ENCODE measurements at regions of chr5 and their contacts with region 1.

Region 1: GRCh38 chr5:25990771-25991170 is 1047.6 kb downstream of the CDH9 start:
- DNase-seq: no peak
- H3K4me3 ChIP-seq: no peak overlapping the region
- H3K4me3 Mint-ChIP-seq: no peak overlapping the region
- H3K27ac ChIP-seq: no peak overlapping the region
- H3K27ac Mint-ChIP-seq: no peak overlapping the region
- H3K4me1 ChIP-seq: no peaks in the 10 kb centered on the region
- H3K4me1 Mint-ChIP-seq: no peaks in the 10 kb centered on the region
- H3K27me3 ChIP-seq: no peaks in the 10 kb centered on the region
- H3K27me3 Mint-ChIP-seq: no peaks in the 10 kb centered on the region

Region 2: DNA sequence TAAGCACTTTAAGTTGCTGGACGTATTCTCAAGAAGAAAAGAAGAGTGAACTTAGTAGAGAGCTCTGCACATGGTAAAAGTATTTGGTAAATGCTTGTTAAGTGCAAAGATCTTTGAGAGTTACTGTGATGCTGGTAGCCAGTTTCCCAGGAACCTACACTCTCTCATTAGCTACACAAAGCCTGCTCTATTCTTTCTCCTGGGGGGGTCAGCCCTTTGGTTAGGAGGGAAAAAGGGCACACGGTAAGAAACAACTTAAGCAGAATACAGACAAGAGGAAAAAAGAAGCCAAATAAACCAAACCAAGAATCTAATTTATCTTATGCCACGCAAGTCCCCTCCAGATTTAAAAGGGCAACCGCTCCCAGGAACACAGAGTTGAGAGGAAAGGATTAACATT is 245.9 kb before region 1 on chr5:
- CTCF ChIA-PET with region 1: no interaction called
- POLR2A ChIA-PET with region 1: no interaction called
- intact Hi-C with region 1: no loop called
- DNase-seq: no peak
- H3K4me3 ChIP-seq: no peak overlapping the region
- H3K4me3 Mint-ChIP-seq: no peak overlapping the region
- H3K27ac ChIP-seq: no peak overlapping the region
- H3K27ac Mint-ChIP-seq: no peak overlapping the region
- H3K4me1 ChIP-seq: no peaks in the 10 kb centered on the region
- H3K4me1 Mint-ChIP-seq: no peaks in the 10 kb centered on the region
- H3K27me3 ChIP-seq: no peaks in the 10 kb centered on the region
- H3K27me3 Mint-ChIP-seq: no peaks in the 10 kb centered on the region

Region 3: GRCh38 chr5:26003966-26004365 is 13.2 kb after region 1 on chr5:
- CTCF ChIA-PET with region 1: no interaction called
- POLR2A ChIA-PET with region 1: no interaction called
- intact Hi-C with region 1: no loop called
- DNase-seq: no peak
- H3K4me3 ChIP-seq: no peak overlapping the region
- H3K4me3 Mint-ChIP-seq: no peak overlapping the region
- H3K27ac ChIP-seq: no peak overlapping the region
- H3K27ac Mint-ChIP-seq: no peak overlapping the region
- H3K4me1 ChIP-seq: no peaks in the 10 kb centered on the region
- H3K4me1 Mint-ChIP-seq: no peaks in the 10 kb centered on the region
- H3K27me3 ChIP-seq: no peaks in the 10 kb centered on the region
- H3K27me3 Mint-ChIP-seq: no peaks in the 10 kb centered on the region

Region 4: GRCh38 chr5:26060212-26060611 is 69.4 kb after region 1 on chr5:
- CTCF ChIA-PET with region 1: no interaction called
- POLR2A ChIA-PET with region 1: no interaction called
- intact Hi-C with region 1: loop called (anchors 1 kb)
- DNase-seq: no peak
- H3K4me3 ChIP-seq: no peak overlapping the region
- H3K4me3 Mint-ChIP-seq: no peak overlapping the region
- H3K27ac ChIP-seq: no peak overlapping the region
- H3K27ac Mint-ChIP-seq: no peak overlapping the region
- H3K4me1 ChIP-seq: no peaks in the 10 kb centered on the region
- H3K4me1 Mint-ChIP-seq: no peaks in the 10 kb centered on the region
- H3K27me3 ChIP-seq: no peaks in the 10 kb centered on the region
- H3K27me3 Mint-ChIP-seq: no peaks in the 10 kb centered on the region

Region 5: DNA sequence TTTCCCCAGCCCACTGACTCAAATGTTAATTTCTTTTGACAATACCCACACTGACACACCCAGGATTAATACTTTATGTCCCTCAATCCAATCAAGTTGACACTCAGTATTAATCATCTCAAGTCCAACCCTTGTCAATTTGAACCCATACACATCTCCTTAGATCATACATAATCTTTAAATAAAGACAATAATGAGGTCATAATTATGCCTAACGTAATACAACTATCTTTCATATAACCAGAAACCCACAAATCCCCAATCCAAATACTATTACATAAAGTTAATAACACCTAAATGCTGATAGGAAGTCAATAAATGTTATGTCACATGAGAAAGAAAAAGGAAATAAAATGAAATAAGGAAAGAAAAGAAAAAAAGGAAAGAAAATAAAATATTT is 113.4 kb after region 1 on chr5:
- CTCF ChIA-PET with region 1: no interaction called
- POLR2A ChIA-PET with region 1: no interaction called
- intact Hi-C with region 1: no loop called
- DNase-seq: no peak
- H3K4me3 ChIP-seq: no peak overlapping the region
- H3K4me3 Mint-ChIP-seq: no peak overlapping the region
- H3K27ac ChIP-seq: no peak overlapping the region
- H3K27ac Mint-ChIP-seq: no peak overlapping the region
- H3K4me1 ChIP-seq: no peaks in the 10 kb centered on the region
- H3K4me1 Mint-ChIP-seq: no peaks in the 10 kb centered on the region
- H3K27me3 ChIP-seq: no peaks in the 10 kb centered on the region
- H3K27me3 Mint-ChIP-seq: no peaks in the 10 kb centered on the region